Caco-2 (cell line): ENCODE measurements at regions of chr3 and their contacts with region 1.

Region 1: DNA sequence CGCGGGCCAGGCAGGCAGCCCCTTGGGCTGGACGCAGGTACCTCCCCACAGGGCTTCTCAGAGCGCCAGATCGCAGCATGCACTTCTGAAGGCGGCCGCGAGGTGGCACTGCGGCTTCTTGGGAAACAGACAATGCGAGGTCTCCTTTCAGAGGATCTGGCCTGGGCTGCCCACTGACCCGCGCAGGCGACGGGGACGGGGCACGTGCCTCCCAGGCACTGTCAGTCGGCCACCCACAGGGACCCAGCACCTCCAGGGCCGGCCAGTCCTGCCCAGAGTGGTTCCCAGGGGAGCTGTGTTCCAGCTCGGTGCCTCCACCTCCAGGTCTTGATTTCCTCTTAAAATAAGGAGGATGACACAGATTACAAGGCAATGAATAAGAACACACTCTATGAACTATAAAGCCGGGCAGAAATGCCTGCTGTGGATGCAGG is 24.4 kb upstream of the TXNRD3 start:
- DNase-seq: peak; percentile 85 to 90
- H3K4me3 ChIP-seq: peak overlapping the region; percentile 14; the same call in 1 of the 2 replicates
- H3K4me3 Mint-ChIP-seq: peak overlapping the region; percentile 69
- H3K27ac Mint-ChIP-seq: no peak overlapping the region
- H3K4me1 ChIP-seq: peaks cover 6% of the 10 kb centered on the region; the same call in 1 of the 2 replicates
- H3K4me1 Mint-ChIP-seq: peaks cover 7% of the 10 kb centered on the region
- H3K27me3 ChIP-seq: no peaks in the 10 kb centered on the region; the same call in 1 of the 2 replicates
- H3K27me3 Mint-ChIP-seq: no peaks in the 10 kb centered on the region
- CTCF ChIP-seq: peak; percentile 94

Region 2: DNA sequence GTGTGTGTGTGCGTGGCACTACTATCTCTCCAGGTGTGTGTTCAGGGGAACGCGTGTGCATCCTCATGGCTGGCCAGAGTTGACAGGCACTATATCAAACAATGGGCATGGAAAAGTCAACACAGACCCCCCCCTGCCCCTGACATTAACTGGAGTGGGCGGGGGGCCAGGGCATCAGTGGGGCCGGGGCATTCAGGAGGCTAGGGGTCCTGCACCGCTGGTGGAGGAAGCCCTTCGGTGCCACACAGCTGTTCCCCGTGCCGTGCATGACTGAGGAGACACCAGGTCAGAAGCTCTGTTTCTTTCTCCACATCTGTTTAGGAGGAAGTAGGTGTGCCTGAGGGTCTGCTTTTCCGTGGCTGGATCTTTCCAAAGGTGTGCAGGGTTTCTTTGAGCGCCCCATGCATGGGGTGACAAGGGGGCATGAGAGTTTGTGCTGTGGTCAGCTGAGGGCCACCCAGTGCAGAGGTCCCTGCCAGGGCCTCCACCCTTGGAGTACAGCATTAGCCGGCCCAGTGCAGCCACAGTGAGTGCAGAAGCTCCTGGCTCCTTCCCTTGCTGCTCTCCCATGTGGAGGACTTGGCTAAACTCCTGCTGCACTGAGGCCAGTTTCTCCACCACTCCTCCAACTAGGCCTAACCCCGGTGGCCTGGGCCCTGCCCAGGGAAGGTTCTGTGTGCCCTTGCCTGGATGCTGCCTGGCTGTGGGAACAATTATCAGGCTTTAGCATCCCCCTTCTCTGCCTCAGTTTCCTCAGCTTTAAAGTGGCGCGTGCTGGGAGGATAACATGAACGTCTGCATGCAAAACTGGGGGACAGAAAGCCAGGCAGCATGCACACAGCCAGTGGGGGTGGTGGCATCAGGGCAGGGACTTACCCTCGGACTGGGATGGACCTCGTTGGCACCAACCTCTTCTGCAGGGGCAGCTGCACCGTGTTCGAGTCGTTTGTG is 127.9 kb before region 1 on chr3:
- CTCF ChIA-PET with region 1: no interaction called
- POLR2A ChIA-PET with region 1: no interaction called
- intact Hi-C with region 1: no loop called
- DNase-seq: peak in 1 of 2 experiments; percentile 25
- H3K4me3 ChIP-seq: no peak overlapping the region
- H3K4me3 Mint-ChIP-seq: no peak overlapping the region
- H3K27ac Mint-ChIP-seq: no peak overlapping the region
- H3K4me1 ChIP-seq: no peaks in the 10 kb centered on the region
- H3K4me1 Mint-ChIP-seq: no peaks in the 10 kb centered on the region
- H3K27me3 ChIP-seq: no peaks in the 10 kb centered on the region
- H3K27me3 Mint-ChIP-seq: peaks cover 6% of the 10 kb centered on the region
- CTCF ChIP-seq: no peak

Region 3: DNA sequence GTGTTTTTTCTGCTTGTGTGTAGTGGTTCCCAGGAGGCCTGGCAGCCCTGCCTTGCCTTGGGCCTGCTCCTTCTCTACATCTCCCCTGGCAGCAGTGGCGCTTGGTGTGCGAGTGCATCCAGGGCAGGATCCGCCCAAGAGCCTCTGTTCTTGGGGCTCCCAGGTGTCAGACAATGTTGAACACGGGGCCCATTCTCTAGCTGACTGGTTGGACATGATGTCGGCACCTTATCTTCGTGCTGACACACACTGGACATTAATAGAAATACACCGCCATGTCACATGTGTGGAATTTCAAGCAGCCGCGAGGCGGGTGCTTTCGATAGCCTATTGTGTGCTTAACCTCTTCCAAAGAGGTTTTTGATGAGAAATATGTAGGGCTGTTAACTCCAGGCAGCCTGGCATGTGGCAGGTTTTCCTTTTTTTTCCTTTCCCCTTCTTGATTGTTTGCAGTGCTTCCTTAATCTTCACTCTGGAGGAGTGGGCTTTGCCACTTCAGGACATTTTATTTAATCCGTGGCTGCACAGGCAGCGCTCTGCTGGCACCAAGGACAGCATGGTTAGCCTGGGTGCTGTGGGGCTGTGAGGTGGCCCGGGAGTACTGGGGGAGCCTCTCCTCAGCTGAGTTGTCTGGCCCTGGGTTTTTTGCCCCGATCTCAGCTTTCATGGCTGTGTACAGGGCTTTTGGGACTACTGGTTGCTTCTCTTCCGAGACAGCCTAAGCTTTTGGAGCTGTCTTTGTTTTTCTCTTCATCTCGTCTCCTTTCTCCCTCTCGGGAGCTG is 67.3 kb after region 1 on chr3:
- CTCF ChIA-PET with region 1: interaction called, 7 read pairs
- POLR2A ChIA-PET with region 1: no interaction called
- intact Hi-C with region 1: loop called (anchors 1 kb)
- DNase-seq: peak; percentile 83 to 91
- H3K4me3 ChIP-seq: peak overlapping the region; percentile 13; the same call in 1 of the 2 replicates
- H3K4me3 Mint-ChIP-seq: peak overlapping the region; percentile 57
- H3K27ac Mint-ChIP-seq: peak overlapping the region; percentile 96
- H3K4me1 ChIP-seq: peaks cover 55% of the 10 kb centered on the region
- H3K4me1 Mint-ChIP-seq: peaks cover 46% of the 10 kb centered on the region
- H3K27me3 ChIP-seq: no peaks in the 10 kb centered on the region
- H3K27me3 Mint-ChIP-seq: no peaks in the 10 kb centered on the region
- CTCF ChIP-seq: peak; percentile 27 to 36

Region 4: DNA sequence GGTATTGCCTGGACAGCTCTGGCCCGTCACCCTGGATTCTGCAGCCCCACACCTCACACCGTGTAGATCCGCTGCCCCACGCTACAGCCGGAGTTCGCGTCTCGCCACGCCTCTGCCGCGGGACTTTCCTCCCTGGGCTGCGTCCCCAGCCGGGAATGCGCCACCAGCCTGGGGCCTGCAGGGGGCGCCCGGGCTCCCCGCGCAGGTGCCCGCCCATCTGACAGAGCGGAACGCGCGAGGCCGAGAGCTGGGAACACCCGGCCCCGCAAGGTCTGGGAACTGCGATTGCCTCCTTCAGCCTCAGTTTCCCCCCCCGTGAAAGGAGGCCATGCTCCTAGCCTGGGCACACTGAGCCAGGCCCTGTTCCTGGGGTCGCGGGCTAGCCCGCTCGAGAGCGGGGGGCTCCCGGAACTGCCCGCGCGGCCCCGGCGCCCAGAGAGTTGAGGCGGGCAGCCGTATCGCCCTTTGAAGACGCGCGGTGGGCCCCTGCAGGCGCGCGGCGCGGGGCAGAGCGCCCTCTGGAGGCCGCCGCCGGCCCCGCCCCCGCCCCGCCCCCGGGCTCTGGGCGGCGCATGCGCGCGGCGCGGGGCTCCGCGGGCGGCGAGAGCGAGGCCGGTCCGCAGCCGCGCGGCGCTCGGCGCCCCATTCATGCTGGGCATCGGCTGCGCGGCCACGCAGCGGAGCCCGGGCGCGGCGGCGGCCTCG is 303.3 kb after region 1 on chr3 and contains the start of gene PLXNA1:
- CTCF ChIA-PET with region 1: no interaction called
- POLR2A ChIA-PET with region 1: no interaction called
- intact Hi-C with region 1: loop called (anchors 1 kb)
- DNase-seq: peak; percentile 65 to 86
- H3K4me3 ChIP-seq: peak within 1 kb of the TSS; percentile 88
- H3K4me3 Mint-ChIP-seq: peak within 1 kb of the TSS; percentile 68
- H3K27ac Mint-ChIP-seq: no peak within 1 kb of the TSS
- H3K4me1 ChIP-seq: peaks cover 16% of the 10 kb centered on the region; the same call in 1 of the 2 replicates
- H3K4me1 Mint-ChIP-seq: peaks cover 7% of the 10 kb centered on the region
- H3K27me3 ChIP-seq: no peaks in the 10 kb centered on the region
- H3K27me3 Mint-ChIP-seq: no peaks in the 10 kb centered on the region
- CTCF ChIP-seq: peak; percentile 92 to 93
- total RNA-seq, gene PLXNA1: 92.4 and 95.1 TPM in 2 replicates

Region 5: GRCh38 chr3:127455541-127456450 is 776.5 kb after region 1 on chr3:
- CTCF ChIA-PET with region 1: no interaction called
- POLR2A ChIA-PET with region 1: no interaction called
- intact Hi-C with region 1: loop called (anchors 10 kb)
- DNase-seq: peak; percentile 56 to 87
- H3K4me3 ChIP-seq: no peak overlapping the region
- H3K4me3 Mint-ChIP-seq: no peak overlapping the region
- H3K27ac Mint-ChIP-seq: no peak overlapping the region
- H3K4me1 ChIP-seq: peaks cover 4% of the 10 kb centered on the region
- H3K4me1 Mint-ChIP-seq: no peaks in the 10 kb centered on the region
- H3K27me3 ChIP-seq: no peaks in the 10 kb centered on the region; the same call in 1 of the 2 replicates
- H3K27me3 Mint-ChIP-seq: peaks cover 22% of the 10 kb centered on the region
- CTCF ChIP-seq: peak; percentile 63 to 95